Tibial artery (tissue), 4 donors: ENCODE measurements at regions of chr18 and their contacts with region 1.

Region 1: GRCh38 chr18:2337552-2338141 is 233.7 kb downstream of the METTL4 start:
- DNase-seq: peak in 1 of 2 donors; percentile 22
- H3K4me3 ChIP-seq: no peak overlapping the region
- H3K27ac ChIP-seq: no peak overlapping the region
- H3K4me1 ChIP-seq: no peaks in the 10 kb centered on the region
- H3K27me3 ChIP-seq: no peaks in the 10 kb centered on the region
- CTCF ChIP-seq: peak; percentile 32 to 58

Region 2: GRCh38 chr18:2540575-2540974 is 202.9 kb after region 1 on chr18:
- intact Hi-C with region 1: loop called (anchors 5 kb)
- DNase-seq: no peak
- H3K4me3 ChIP-seq: no peak overlapping the region
- H3K27ac ChIP-seq: no peak overlapping the region
- H3K4me1 ChIP-seq: peaks cover 0 to 36% (median 10%) of the 10 kb centered on the region in 4 donors
- H3K27me3 ChIP-seq: no peaks in the 10 kb centered on the region
- CTCF ChIP-seq: no peak